CD4-positive, alpha-beta T cell (primary cell): ENCODE measurements at regions of chr11 and their contacts with region 1.

Region 1: DNA sequence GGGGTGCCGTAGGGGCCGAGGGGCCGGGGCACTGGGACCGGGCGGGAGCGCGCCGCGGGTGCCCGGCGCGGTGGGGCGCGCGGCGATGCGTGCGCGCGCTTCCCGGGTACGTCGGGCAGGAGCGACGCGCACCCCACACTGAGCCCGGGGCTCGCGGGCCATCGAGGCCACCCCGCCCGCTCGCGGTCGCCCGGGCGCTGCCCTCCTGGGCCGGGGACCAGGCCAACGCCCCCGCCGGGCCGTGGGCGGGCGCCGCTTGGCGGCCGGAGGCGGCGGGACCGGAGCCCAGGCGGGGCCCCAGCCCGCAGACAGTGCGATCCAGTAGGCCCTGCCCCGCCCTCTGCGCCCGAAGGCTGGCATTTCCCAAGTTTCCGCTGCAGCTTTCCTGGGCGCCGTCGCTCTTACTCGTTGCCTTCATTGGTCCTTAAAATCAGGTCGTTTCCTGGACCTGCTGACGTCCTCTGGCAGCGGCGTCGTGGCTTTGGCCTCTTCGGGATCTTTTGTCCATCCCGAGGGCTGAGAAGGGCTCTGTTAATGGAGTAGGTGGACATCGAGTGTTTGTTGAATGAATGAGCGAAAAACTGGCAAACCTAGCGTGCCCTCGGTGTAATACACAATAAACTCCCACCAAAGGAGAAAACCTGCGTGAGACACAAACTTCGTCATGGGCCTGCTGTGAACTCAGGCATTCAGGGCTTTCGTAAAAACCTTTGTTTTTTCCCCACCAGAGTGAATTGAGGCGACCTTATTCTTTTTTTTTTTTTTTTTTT is 638 bp downstream of the PARVA start:
- DNase-seq: peak in 3 of 14 experiments; percentile 19 to 51 (median 43)
- ATAC-seq: peak; percentile 46
- H3K4me3 ChIP-seq: peak overlapping the region; percentile 50
- H3K4me3 Mint-ChIP-seq: peak overlapping the region; percentile 80
- H3K27ac ChIP-seq: no peak overlapping the region
- H3K27ac Mint-ChIP-seq: no peak overlapping the region
- H3K4me1 ChIP-seq: peaks cover 12% of the 10 kb centered on the region
- H3K4me1 Mint-ChIP-seq: peaks cover 16% of the 10 kb centered on the region
- H3K27me3 ChIP-seq: peaks cover 0 to 3% of the 10 kb centered on the region in 2 experiments
- H3K27me3 Mint-ChIP-seq: peaks cover 44% of the 10 kb centered on the region
- CTCF ChIP-seq: no peak

Region 2: GRCh38 chr11:12361682-12362081 is 16.3 kb before region 1 on chr11:
- CTCF ChIA-PET with region 1: interaction called, 4 read pairs
- POLR2A ChIA-PET with region 1: interaction called, 20 read pairs
- intact Hi-C with region 1: no loop called
- DNase-seq: no peak
- ATAC-seq: no peak
- H3K4me3 ChIP-seq: no peak overlapping the region
- H3K4me3 Mint-ChIP-seq: no peak overlapping the region
- H3K27ac ChIP-seq: no peak overlapping the region
- H3K27ac Mint-ChIP-seq: peak overlapping the region; percentile 69
- H3K4me1 ChIP-seq: peaks cover 59% of the 10 kb centered on the region
- H3K4me1 Mint-ChIP-seq: peaks cover 82% of the 10 kb centered on the region
- H3K27me3 ChIP-seq: no peaks in the 10 kb centered on the region
- H3K27me3 Mint-ChIP-seq: no peaks in the 10 kb centered on the region
- CTCF ChIP-seq: no peak